T-cell (primary cell): ENCODE measurements at regions of chr6 and their contacts with region 1.

Region 1: DNA sequence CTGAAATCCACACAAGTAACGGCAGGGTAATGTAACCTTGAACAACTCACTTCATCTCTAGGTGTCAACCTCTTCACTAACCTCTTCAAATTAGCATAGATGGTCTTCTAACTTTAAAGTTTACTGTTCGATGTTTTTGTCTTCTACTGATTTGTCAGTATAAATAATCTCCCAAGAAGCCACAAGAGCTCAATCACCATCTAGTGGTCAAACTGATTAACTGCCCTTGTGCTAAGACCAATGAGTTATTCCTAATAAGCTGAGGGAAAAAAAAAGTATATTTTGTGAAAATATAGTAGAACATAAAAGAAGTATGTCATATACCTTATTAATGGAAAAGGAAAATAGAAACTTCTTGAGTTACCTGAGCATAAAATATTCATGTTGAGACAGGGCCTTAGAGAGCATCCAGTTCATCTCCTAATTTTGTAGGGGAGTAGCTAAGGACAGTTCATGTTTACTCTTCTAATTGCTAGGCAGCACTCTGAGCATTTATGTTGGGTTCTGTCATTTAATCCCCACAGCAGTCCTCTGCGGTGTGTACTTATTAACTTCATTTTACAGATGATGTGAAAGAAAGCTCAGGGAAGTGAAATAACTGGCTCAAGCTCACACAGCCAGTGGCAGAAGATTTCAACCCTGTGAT is 317.1 kb downstream of the ESR1 start:
- DNase-seq: peak in 1 of 35 experiments; percentile 50
- ATAC-seq: peak in 2 of 4 experiments; percentile 30 to 39
- H3K4me3 ChIP-seq: no peak overlapping the region
- H3K4me3 Mint-ChIP-seq: no peak overlapping the region
- H3K27ac ChIP-seq: no peak overlapping the region
- H3K27ac Mint-ChIP-seq: peak overlapping the region; percentile 11 to 31
- H3K4me1 ChIP-seq: no peaks in the 10 kb centered on the region
- H3K4me1 Mint-ChIP-seq: no peaks in the 10 kb centered on the region
- H3K27me3 ChIP-seq: no peaks in the 10 kb centered on the region
- H3K27me3 Mint-ChIP-seq: no peaks in the 10 kb centered on the region

Region 2: DNA sequence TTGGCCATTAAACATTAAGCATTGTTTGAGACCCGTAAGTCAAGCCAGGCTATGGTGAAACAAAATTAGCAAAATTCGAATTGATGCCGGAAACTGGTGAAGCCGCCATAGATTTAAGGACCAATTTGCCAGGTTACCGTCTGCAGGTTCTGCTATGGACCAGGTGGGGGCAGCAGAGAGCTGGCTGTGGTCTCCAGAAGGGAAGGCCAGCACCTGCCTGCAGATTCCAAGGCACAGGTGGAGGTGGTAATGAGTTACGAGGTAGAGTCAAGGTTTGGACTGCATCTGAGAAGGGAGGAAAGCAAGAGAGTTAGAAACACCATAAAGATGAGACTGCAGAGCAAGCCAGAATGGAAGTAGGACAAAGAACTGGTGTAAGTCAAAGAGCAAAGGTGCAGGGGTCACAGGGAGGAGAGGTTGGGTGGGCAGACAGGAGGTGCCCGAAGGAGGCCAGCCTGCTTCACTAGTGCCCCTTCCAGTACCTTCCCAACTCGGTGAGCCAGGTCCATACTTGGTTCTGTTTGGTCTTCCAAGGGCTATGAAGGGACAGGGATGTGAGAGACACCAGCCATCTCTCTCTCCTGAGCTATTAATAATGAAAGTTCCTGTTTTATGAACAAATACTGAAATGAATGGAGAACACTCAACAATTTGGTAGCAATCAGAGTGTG is 448.7 kb before region 1 on chr6:
- CTCF ChIA-PET with region 1: interaction called, 4 to 15 read pairs
- POLR2A ChIA-PET with region 1: no interaction called
- DNase-seq: peak in 33 of 35 experiments; percentile 5 to 76 (median 34)
- ATAC-seq: peak; percentile 66 to 76 (median 71)
- H3K4me3 ChIP-seq: no peak overlapping the region
- H3K4me3 Mint-ChIP-seq: no peak overlapping the region
- H3K27ac ChIP-seq: no peak overlapping the region
- H3K27ac Mint-ChIP-seq: no peak overlapping the region
- H3K4me1 ChIP-seq: no peaks in the 10 kb centered on the region
- H3K4me1 Mint-ChIP-seq: peaks cover 0 to 9% (median 0%) of the 10 kb centered on the region in 3 donors
- H3K27me3 ChIP-seq: peaks cover 0 to 2% of the 10 kb centered on the region in 2 experiments
- H3K27me3 Mint-ChIP-seq: no peaks in the 10 kb centered on the region

Region 3: DNA sequence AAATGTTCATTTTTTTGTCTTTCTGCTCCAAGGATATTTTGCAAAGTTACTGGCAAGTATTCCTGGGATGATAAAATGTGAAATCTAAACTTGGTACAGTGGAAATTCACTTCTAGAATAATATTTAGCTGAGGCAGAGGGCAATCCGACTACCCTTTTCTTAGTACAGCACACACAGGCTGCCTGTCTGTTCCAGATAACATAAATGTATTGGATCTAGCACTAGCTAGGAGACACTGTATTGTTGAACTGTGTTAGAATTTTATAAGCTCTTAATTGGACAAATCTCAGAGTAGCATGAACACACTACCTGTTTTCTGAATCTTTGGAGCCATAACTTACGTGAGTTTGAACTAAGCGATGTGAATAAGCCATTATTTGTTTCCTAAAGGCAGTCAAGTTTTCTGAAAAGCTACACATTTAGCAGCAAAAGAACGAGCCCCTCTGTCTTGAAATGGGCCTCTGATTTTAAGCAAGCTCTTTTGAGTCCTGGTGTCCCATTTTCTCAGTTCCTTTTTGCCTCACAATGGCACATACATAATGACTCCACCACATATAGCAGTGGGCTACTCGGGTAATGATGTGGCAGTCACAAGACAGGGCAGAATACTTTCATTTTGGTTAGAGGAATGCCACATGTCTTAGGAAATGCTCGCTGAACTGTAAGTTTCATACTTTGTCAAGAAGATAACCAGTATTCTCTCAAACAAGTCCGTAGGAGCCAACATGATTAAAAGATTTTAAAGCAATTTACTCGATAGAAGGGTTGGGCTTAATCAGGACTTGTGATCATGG is 433.6 kb before region 1 on chr6:
- CTCF ChIA-PET with region 1: interaction called, 3 to 21 read pairs
- POLR2A ChIA-PET with region 1: no interaction called
- DNase-seq: peak in 7 of 35 experiments; percentile 4 to 57 (median 8)
- ATAC-seq: peak; percentile 65 to 85 (median 73)
- H3K4me3 ChIP-seq: peak overlapping the region; percentile 33 to 40
- H3K4me3 Mint-ChIP-seq: peak overlapping the region; percentile 68 to 83 (median 83)
- H3K27ac ChIP-seq: peak overlapping the region; percentile 30
- H3K27ac Mint-ChIP-seq: peak overlapping the region; percentile 82 to 94
- H3K4me1 ChIP-seq: peaks cover 0 to 2% of the 10 kb centered on the region in 2 experiments
- H3K4me1 Mint-ChIP-seq: peaks cover 18 to 35% (median 21%) of the 10 kb centered on the region in 3 donors
- H3K27me3 ChIP-seq: no peaks in the 10 kb centered on the region
- H3K27me3 Mint-ChIP-seq: peaks cover 0 to 2% of the 10 kb centered on the region in 2 donors

Region 4: GRCh38 chr6:151765444-151765886 is 359.1 kb before region 1 on chr6:
- CTCF ChIA-PET with region 1: interaction called in 1 of 2 experiments, 18 read pairs
- POLR2A ChIA-PET with region 1: no interaction called
- DNase-seq: peak in 18 of 35 experiments; percentile 3 to 62 (median 14)
- ATAC-seq: peak; percentile 43 to 53 (median 46)
- H3K4me3 ChIP-seq: no peak overlapping the region
- H3K4me3 Mint-ChIP-seq: no peak overlapping the region
- H3K27ac ChIP-seq: no peak overlapping the region
- H3K27ac Mint-ChIP-seq: no peak overlapping the region
- H3K4me1 ChIP-seq: peaks cover 0 to 2% of the 10 kb centered on the region in 2 experiments
- H3K4me1 Mint-ChIP-seq: peaks cover 9 to 17% (median 15%) of the 10 kb centered on the region in 3 donors
- H3K27me3 ChIP-seq: no peaks in the 10 kb centered on the region
- H3K27me3 Mint-ChIP-seq: peaks cover 4 to 8% of the 10 kb centered on the region in 2 donors

Region 5: GRCh38 chr6:152338335-152339125 is 214.0 kb after region 1 on chr6:
- CTCF ChIA-PET with region 1: no interaction called
- POLR2A ChIA-PET with region 1: no interaction called
- DNase-seq: peak in 33 of 35 experiments; percentile 8 to 77 (median 40)
- ATAC-seq: peak; percentile 74 to 80 (median 77)
- H3K4me3 ChIP-seq: no peak overlapping the region
- H3K4me3 Mint-ChIP-seq: no peak overlapping the region
- H3K27ac ChIP-seq: no peak overlapping the region
- H3K27ac Mint-ChIP-seq: no peak overlapping the region
- H3K4me1 ChIP-seq: peaks cover 0 to 3% of the 10 kb centered on the region in 2 experiments
- H3K4me1 Mint-ChIP-seq: peaks cover 0 to 5% (median 4%) of the 10 kb centered on the region in 3 donors
- H3K27me3 ChIP-seq: no peaks in the 10 kb centered on the region
- H3K27me3 Mint-ChIP-seq: peaks cover 2 to 3% of the 10 kb centered on the region in 2 donors